HEK293T (cell line): ENCODE measurements at regions of chr3 and their contacts with region 1.

Region 1: DNA sequence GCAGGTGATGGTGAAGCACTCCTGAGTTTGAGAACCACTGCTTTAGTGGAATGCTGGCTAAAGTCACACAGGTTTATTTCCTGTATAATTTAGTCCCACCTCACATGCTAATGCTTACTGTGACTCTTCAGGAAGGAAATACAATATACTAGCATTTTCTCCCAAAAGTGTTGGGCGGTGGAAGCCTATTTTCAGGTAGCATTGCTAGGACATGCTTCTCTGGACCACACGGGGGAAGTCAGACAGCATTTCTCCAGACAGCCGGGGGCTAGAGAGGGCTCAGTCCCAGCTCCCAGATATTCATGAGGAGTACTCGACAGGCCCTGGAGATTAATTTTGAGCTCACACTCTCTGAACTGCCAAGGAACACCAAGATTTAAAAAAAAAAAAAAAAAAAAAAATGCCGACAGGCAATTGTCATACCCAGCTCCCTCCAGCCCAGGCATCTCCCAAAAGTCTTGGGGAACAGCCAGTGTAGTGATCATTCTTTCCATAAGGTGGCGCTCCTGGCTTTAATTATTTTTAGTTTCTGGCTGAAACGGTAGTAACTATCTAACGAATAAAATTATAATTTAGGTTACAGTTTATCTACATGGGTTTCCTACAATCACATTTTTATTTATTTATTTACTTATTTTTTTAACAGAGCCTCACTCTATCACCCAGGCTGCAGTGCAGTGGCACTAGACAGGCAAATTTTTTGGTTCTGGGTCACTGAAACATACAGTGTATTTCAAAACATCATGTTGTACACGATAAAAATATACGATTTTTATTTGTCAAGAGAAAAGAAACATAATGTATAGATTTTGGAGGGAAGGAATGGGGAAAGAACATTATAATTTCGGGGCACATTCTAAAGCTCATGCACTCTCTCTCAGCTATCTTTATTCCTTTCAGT is 157.4 kb downstream of the ADAMTS9 start:
- DNase-seq: peak; percentile 59

Region 2: DNA sequence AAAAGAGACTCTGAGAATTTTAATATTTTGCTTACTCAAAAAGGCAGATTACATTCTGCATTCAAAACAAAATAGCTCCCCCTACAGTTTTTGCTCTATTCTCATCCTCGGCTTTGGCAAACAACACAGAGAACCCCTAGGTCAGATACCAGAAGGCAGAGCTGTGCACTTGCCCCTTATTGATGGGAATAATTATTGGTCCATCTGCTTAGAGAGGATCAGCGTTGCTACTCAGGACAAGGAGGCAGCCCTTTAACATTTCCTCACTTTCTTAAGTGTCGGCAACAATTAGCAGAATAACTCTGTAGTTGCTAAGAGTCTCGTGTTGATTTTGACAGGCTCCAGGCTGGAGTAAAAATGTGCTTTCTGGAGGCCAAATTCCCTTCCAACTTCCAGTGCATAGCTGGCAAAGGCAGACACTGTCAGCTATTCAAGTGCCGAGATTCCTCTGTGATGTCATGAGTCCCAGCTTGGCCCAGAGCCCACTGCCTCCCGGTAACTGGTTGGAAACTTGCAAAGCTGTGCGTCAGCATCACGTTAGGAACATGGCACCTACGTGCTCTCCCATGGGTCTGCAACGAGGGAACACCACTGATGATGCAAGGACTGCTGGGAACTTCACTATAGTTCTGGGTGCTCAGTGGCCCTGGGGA is 640.1 kb after region 1 on chr3:
- CTCF ChIA-PET with region 1: interaction called, 14 read pairs
- POLR2A ChIA-PET with region 1: no interaction called
- DNase-seq: peak; percentile 33